CD8-positive, alpha-beta T cell (primary cell): ENCODE measurements at regions of chr5 and their contacts with region 1.

Region 1: DNA sequence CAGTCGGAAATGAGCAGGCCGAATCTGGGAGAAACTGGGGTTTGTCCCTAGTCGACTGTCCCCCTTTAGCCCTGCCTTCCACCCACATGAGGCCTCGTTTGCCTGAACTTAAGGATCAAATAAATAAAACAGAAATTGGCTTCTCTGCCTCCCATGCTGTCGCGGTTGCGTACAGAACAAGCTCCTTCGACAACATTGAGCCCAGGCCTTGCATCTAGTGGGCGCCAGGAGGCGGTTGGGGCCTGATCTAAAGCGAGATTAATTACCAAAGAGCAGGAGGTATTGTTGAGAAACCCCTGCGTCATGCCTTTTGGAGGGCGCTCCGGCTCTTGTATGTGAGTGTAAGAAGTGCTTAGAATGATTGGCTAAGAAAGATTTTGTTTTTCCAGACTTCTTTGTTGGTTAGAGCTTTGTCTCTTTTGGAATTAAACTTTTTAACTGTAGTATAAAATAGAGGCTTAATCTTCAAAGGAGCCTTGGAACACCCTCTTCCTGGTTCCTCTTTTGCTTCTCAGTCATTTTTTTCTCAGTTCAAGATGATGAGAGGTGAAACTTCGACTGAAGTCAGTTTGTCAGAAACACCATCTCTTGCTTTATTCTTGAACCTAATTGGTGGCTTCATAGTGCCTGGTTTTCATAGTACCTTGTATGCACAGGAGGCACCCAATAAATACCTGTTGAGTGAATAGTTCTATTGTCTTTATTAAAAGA is 827 bp downstream of the ATP6V0E1 start:
- DNase-seq: peak; percentile 52 to 90 (median 76)
- ATAC-seq: peak; percentile 84
- H3K4me3 ChIP-seq: peak overlapping the region; percentile 78 to 100
- H3K4me3 Mint-ChIP-seq: peak overlapping the region; percentile 97
- H3K27ac ChIP-seq: peak overlapping the region; percentile 74 to 99
- H3K27ac Mint-ChIP-seq: peak overlapping the region; percentile 98
- H3K4me1 ChIP-seq: peaks cover 18% of the 10 kb centered on the region
- H3K4me1 Mint-ChIP-seq: peaks cover 48% of the 10 kb centered on the region
- H3K27me3 ChIP-seq: no peaks in the 10 kb centered on the region
- H3K27me3 Mint-ChIP-seq: no peaks in the 10 kb centered on the region
- CTCF ChIP-seq: peak; percentile 52

Region 2: DNA sequence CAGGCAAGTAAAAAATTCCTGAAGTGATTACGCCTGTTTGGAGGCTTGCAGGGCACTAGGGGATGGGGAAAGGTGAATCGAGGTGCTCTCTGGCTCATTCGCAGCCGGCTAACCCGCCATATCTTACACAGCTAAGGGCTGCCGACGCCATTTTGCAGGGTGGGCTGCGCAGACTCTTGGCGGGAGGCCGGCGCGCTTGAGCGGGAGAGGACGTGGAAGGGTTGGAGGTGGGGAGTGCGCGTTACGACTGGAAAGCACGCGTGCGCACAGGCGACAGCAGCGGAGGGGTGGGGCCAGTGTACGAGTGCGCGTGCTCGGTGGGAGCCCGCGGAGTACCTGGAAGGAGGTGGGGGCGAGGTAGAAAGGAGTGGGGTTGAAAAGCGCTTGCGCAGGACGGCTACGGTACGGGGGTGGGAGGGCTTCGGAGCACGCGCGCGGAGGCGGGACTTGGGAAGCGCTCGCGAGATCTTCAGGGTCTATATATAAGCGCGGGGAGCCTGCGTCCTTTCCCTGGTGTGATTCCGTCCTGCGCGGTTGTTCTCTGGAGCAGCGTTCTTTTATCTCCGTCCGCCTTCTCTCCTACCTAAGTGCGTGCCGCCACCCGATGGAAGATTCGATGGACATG is 1596.9 kb before region 1 on chr5 and contains the start of gene NPM1:
- CTCF ChIA-PET with region 1: no interaction called
- POLR2A ChIA-PET with region 1: no interaction called
- intact Hi-C with region 1: loop called in 1 of 2 experiments (anchors 10 kb)
- DNase-seq: peak; percentile 95 to 100 (median 97)
- ATAC-seq: peak; percentile 88
- H3K4me3 ChIP-seq: peak within 1 kb of the TSS; percentile 92 to 96
- H3K4me3 Mint-ChIP-seq: peak within 1 kb of the TSS; percentile 96
- H3K27ac ChIP-seq: peak within 1 kb of the TSS; percentile 94 to 97
- H3K27ac Mint-ChIP-seq: peak within 1 kb of the TSS; percentile 99
- H3K4me1 ChIP-seq: peaks cover 45% of the 10 kb centered on the region
- H3K4me1 Mint-ChIP-seq: peaks cover 46% of the 10 kb centered on the region
- H3K27me3 ChIP-seq: no peaks in the 10 kb centered on the region
- H3K27me3 Mint-ChIP-seq: peaks cover 3% of the 10 kb centered on the region
- CTCF ChIP-seq: no peak
- total RNA-seq, gene NPM1: 1,297 to 1,299 TPM

Region 3: GRCh38 chr5:172944741-172945140 is 39.7 kb before region 1 on chr5:
- CTCF ChIA-PET with region 1: no interaction called
- POLR2A ChIA-PET with region 1: no interaction called
- intact Hi-C with region 1: no loop called
- DNase-seq: no peak
- ATAC-seq: no peak
- H3K4me3 ChIP-seq: no peak overlapping the region
- H3K4me3 Mint-ChIP-seq: no peak overlapping the region
- H3K27ac ChIP-seq: no peak overlapping the region
- H3K27ac Mint-ChIP-seq: no peak overlapping the region
- H3K4me1 ChIP-seq: no peaks in the 10 kb centered on the region
- H3K4me1 Mint-ChIP-seq: no peaks in the 10 kb centered on the region
- H3K27me3 ChIP-seq: no peaks in the 10 kb centered on the region
- H3K27me3 Mint-ChIP-seq: no peaks in the 10 kb centered on the region
- CTCF ChIP-seq: no peak

Region 4: DNA sequence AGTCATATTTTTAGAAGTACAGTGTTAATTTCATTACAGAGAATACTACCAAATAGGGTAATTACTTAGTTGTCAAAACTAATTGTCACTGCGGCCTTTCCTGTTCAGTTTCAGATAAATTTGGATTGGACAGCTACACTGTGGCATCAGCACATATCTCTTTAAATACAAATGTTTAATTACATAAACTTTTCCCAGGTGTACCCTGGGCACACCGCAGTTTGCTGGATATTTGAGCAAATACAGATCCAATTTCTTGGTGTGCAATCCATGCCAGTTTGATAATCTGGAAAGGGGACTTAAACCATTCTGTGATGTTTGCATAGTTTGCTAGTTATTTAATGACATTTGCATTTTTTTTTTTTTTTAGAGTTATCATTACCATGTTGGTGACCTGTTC is 10.0 kb after region 1 on chr5:
- CTCF ChIA-PET with region 1: interaction called, 14 read pairs
- POLR2A ChIA-PET with region 1: interaction called, 3 read pairs
- intact Hi-C with region 1: no loop called
- DNase-seq: no peak
- ATAC-seq: no peak
- H3K4me3 ChIP-seq: no peak overlapping the region
- H3K4me3 Mint-ChIP-seq: no peak overlapping the region
- H3K27ac ChIP-seq: no peak overlapping the region
- H3K27ac Mint-ChIP-seq: peak overlapping the region; percentile 61
- H3K4me1 ChIP-seq: peaks cover 7% of the 10 kb centered on the region
- H3K4me1 Mint-ChIP-seq: peaks cover 46% of the 10 kb centered on the region
- H3K27me3 ChIP-seq: no peaks in the 10 kb centered on the region
- H3K27me3 Mint-ChIP-seq: no peaks in the 10 kb centered on the region
- CTCF ChIP-seq: no peak

Region 5: DNA sequence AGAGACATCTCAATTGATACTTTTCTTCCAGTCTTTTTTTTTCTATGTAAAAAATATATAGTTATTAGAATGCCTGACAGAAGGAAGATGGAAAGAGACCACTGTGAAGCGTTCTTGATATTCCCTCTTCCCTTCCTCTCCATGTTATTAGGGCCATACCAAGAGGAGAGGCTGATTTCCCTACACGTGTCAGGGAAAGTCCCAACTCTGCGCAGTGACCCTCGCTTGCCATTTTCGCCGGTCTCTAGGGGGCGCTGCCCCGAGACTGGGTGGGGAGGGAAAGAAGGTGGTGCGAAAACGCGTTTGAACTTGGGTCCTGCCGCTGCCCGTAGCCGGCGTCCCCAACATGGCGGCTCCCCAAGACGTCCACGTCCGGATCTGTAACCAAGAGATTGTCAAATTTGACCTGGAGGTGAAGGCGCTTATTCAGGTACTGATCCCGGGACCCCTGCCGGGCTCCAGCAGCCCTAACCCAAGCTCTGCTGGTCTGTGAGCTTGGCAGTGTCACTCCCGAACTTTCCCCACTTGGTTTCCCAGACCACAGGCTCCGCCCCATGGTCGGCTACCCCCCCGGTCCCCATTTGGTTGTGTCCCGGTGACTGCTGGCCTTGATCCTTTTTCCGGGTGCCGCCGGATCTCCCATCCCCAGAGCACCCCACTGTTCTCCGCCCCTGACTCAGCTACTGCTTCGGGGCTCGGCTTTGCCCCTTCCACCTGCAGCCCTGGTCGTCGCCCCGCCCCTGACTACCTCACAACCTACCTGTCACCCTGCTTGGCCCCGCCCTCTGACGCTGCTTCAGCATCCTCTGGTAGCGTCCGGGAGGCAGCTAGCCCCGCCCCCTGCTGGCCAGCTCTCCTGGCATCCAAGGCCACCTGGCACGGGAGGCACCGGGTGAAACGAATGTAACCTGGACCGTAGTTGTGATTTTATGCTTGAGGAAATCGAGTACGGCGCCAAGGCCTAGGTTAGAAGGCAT is 160.1 kb after region 1 on chr5 and contains the start of gene BNIP1:
- CTCF ChIA-PET with region 1: interaction called, 8 read pairs
- POLR2A ChIA-PET with region 1: interaction called, 21 read pairs
- intact Hi-C with region 1: loop called (anchors 1 kb)
- DNase-seq: peak; percentile 91 to 98 (median 97)
- ATAC-seq: peak; percentile 94
- H3K4me3 ChIP-seq: peak within 1 kb of the TSS; percentile 74 to 99
- H3K4me3 Mint-ChIP-seq: peak within 1 kb of the TSS; percentile 99
- H3K27ac ChIP-seq: peak within 1 kb of the TSS; percentile 95 to 98
- H3K27ac Mint-ChIP-seq: peak within 1 kb of the TSS; percentile 99
- H3K4me1 ChIP-seq: peaks cover 10% of the 10 kb centered on the region
- H3K4me1 Mint-ChIP-seq: peaks cover 11% of the 10 kb centered on the region
- H3K27me3 ChIP-seq: no peaks in the 10 kb centered on the region
- H3K27me3 Mint-ChIP-seq: no peaks in the 10 kb centered on the region
- CTCF ChIP-seq: peak; percentile 68
- total RNA-seq, gene BNIP1: 22.7 to 24.0 TPM

Region 6: GRCh38 chr5:173331956-173332479 is 347.6 kb after region 1 on chr5:
- CTCF ChIA-PET with region 1: no interaction called
- POLR2A ChIA-PET with region 1: no interaction called
- intact Hi-C with region 1: loop called in 1 of 2 experiments (anchors 5 kb)
- DNase-seq: peak; percentile 24 to 69 (median 61)
- ATAC-seq: peak; percentile 96
- H3K4me3 ChIP-seq: no peak overlapping the region
- H3K4me3 Mint-ChIP-seq: no peak overlapping the region
- H3K27ac ChIP-seq: no peak overlapping the region
- H3K27ac Mint-ChIP-seq: no peak overlapping the region
- H3K4me1 ChIP-seq: no peaks in the 10 kb centered on the region
- H3K4me1 Mint-ChIP-seq: peaks cover 14% of the 10 kb centered on the region
- H3K27me3 ChIP-seq: peaks cover 0 to 8% of the 10 kb centered on the region in 2 experiments
- H3K27me3 Mint-ChIP-seq: peaks cover 54% of the 10 kb centered on the region
- CTCF ChIP-seq: peak; percentile 45

Region 7: GRCh38 chr5:173615884-173616576 is 631.6 kb after region 1 on chr5:
- CTCF ChIA-PET with region 1: no interaction called
- POLR2A ChIA-PET with region 1: no interaction called
- intact Hi-C with region 1: loop called in 1 of 2 experiments (anchors 5 kb)
- DNase-seq: peak; percentile 41 to 88 (median 70)
- ATAC-seq: peak; percentile 60
- H3K4me3 ChIP-seq: peak overlapping the region; percentile 81 to 89
- H3K4me3 Mint-ChIP-seq: peak overlapping the region; percentile 95
- H3K27ac ChIP-seq: peak overlapping the region; percentile 85 to 91
- H3K27ac Mint-ChIP-seq: peak overlapping the region; percentile 97
- H3K4me1 ChIP-seq: peaks cover 34% of the 10 kb centered on the region
- H3K4me1 Mint-ChIP-seq: peaks cover 52% of the 10 kb centered on the region
- H3K27me3 ChIP-seq: no peaks in the 10 kb centered on the region
- H3K27me3 Mint-ChIP-seq: no peaks in the 10 kb centered on the region
- CTCF ChIP-seq: peak; percentile 73

Region 8: DNA sequence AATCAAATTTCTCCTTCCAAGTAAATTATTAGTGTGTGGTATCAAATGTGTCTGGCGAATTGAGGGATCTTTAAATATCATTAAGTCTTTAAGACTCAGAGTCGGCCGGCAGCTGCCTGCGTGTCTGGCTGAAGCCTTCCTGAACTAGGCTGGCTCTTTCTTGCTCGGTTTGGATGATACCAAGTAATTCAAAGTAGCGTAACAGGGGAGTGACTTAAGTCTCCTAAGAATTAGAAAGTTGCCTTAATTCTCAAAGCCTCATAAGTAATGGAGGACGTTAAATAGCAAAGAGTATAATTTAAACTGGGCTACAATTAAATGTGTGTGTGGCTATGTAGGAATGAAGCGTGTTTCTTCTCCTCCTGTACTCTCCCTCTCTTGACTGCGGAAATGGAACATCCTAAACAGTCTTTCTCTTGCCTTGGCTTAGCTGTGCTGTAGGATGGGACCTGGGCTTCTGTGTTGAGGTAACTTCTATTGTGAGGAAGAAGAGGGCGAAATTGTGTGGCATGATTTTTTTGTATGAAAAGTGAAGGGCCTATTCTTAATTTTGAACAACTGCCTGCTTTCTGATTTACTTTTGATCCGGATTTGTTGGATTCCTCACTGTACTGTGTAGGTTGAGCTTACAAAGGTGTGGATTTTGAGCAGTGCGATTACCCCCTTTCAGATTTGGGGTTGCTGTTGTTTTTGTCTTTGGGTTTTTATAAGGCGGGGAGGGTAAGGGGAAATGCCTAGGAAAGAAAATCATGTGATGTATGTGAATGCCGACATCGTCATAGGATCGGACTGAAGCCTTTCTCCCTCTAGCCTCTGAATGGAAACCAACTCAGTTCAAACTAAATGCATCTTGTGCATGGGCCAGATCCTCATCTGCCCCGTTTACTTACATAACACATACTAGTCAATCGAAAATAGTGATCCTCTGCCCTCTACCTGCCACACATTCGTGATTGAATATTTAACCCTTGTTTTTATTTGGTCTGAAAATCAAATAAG is 933.7 kb after region 1 on chr5:
- CTCF ChIA-PET with region 1: no interaction called
- POLR2A ChIA-PET with region 1: no interaction called
- intact Hi-C with region 1: loop called in 1 of 2 experiments (anchors 5 kb)
- DNase-seq: peak; percentile 18 to 89 (median 59)
- ATAC-seq: peak; percentile 92
- H3K4me3 ChIP-seq: peak overlapping the region; percentile 58 to 63
- H3K4me3 Mint-ChIP-seq: no peak overlapping the region
- H3K27ac ChIP-seq: peak overlapping the region; percentile 68 to 84
- H3K27ac Mint-ChIP-seq: no peak overlapping the region
- H3K4me1 ChIP-seq: peaks cover 13% of the 10 kb centered on the region
- H3K4me1 Mint-ChIP-seq: peaks cover 23% of the 10 kb centered on the region
- H3K27me3 ChIP-seq: no peaks in the 10 kb centered on the region
- H3K27me3 Mint-ChIP-seq: no peaks in the 10 kb centered on the region
- CTCF ChIP-seq: no peak